ENCODE measurements at regions of chr6 and their contacts with region 1.

Region 1: DNA sequence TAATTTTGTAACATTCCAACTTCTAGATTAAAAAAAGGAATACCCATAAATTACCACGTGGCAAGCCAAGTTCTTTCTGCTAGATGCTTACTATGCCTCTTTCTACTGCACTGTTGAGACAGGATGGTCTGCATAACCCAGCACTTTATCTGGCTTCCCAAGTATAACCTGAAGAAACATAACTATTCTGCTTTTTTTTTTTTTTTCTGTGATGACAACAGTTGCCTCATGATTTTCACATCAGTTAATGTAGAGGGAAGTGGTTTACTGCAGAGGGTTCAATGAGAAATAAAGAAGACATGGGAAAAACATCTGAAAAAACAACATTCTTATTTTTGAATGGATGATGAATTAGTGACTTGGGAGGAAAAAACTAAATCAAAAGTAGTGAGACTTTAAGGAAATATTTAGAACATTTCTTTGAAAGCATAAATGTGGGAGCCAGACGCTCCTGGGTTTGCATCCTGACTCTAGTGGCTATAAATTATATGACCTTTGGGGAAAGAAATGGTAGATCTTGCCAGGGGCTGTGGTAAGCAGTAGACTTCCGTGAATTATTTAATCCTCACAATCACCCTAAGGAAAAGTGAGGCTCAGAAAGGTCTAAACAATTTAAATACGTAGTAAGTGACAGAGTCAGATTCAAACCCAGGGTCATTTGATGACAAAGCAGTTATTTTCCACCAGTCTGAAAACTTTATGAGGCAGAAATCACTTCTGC is 230.7 kb downstream of the PHACTR1 start:
- DNase-seq: no peak
- ATAC-seq: no peak
- H3K4me3 ChIP-seq: no peak overlapping the region
- H3K27ac ChIP-seq: no peak overlapping the region
- H3K4me1 ChIP-seq: no peaks in the 10 kb centered on the region
- H3K27me3 ChIP-seq: no peaks in the 10 kb centered on the region

Region 2: GRCh38 chr6:12265791-12266190 is 681.5 kb before region 1 on chr6:
- intact Hi-C with region 1: no loop called
- DNase-seq: no peak
- ATAC-seq: no peak
- H3K4me3 ChIP-seq: no peak overlapping the region
- H3K27ac ChIP-seq: no peak overlapping the region
- H3K4me1 ChIP-seq: no peaks in the 10 kb centered on the region
- H3K27me3 ChIP-seq: no peaks in the 10 kb centered on the region

Region 3: GRCh38 chr6:12729467-12729866 is 217.8 kb before region 1 on chr6:
- intact Hi-C with region 1: no loop called
- DNase-seq: no peak
- ATAC-seq: no peak
- H3K4me3 ChIP-seq: no peak overlapping the region
- H3K27ac ChIP-seq: no peak overlapping the region
- H3K4me1 ChIP-seq: no peaks in the 10 kb centered on the region
- H3K27me3 ChIP-seq: peaks cover 0 to 2% of the 10 kb centered on the region in 2 donors

Region 4: GRCh38 chr6:12911387-12911960 is 35.8 kb before region 1 on chr6:
- intact Hi-C with region 1: loop called in 1 of 2 experiments (anchors 5 kb)
- DNase-seq: no peak
- ATAC-seq: no peak
- H3K4me3 ChIP-seq: no peak overlapping the region
- H3K27ac ChIP-seq: no peak overlapping the region
- H3K4me1 ChIP-seq: no peaks in the 10 kb centered on the region
- H3K27me3 ChIP-seq: no peaks in the 10 kb centered on the region

Region 5: DNA sequence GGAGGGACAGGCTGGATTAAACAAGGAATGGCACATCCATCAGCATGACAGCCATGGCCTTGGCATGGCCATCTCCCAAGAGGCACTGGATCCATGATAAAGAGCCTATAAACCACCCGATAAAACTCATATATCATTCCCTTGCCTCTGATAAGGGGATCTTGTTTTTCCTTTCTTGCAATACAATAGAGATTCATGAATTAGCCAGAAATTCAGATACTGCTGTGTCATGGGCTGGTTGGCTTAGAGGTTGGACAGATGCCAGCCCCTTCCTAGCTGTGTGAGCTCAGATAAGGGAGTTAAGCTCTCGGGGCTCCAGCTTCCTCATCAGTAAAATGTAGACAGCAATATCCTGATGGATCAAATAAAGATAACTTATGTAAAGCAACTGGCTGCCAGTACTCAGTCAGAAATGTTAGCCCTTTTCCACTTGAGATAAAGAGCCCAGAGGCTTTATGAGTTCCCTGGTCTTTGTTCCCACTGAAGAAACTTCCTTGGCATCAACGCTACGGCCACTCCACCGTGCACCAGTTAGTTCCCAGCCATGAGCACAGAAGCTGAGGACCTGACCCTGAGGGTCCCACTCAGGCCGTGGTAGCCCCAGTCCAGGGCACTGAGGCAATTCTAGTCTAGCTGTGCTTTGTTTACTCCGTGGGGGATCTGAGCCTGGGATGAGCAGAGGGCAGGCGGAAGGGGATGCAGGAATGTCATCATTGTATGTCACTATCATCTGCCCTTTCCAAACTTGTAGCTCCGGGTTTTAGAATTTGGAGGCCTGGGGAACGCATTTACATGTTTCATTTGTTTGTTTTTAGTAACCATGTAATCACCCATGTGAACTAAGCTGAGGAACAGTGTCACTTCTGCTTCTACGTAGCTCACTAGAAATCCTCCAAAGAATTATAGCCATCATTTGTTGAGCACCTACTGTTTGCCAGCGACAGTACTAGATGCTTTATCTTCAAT is 448.2 kb after region 1 on chr6:
- intact Hi-C with region 1: no loop called
- DNase-seq: peak; percentile 83 to 86
- ATAC-seq: peak; percentile 79
- H3K4me3 ChIP-seq: no peak overlapping the region
- H3K27ac ChIP-seq: no peak overlapping the region
- H3K4me1 ChIP-seq: peaks cover 2 to 3% of the 10 kb centered on the region in 2 donors
- H3K27me3 ChIP-seq: peaks cover 0 to 1% of the 10 kb centered on the region in 2 donors